ENCODE measurements at regions of chr5 and their contacts with region 1.

Region 1: GRCh38 chr5:54243473-54244080 is 66.8 kb downstream of the ARL15 start:
- DNase-seq: peak; percentile 34
- H3K4me3 Mint-ChIP-seq: no peak overlapping the region
- H3K27ac Mint-ChIP-seq: no peak overlapping the region
- H3K4me1 Mint-ChIP-seq: no peaks in the 10 kb centered on the region
- H3K27me3 Mint-ChIP-seq: no peaks in the 10 kb centered on the region

Region 2: DNA sequence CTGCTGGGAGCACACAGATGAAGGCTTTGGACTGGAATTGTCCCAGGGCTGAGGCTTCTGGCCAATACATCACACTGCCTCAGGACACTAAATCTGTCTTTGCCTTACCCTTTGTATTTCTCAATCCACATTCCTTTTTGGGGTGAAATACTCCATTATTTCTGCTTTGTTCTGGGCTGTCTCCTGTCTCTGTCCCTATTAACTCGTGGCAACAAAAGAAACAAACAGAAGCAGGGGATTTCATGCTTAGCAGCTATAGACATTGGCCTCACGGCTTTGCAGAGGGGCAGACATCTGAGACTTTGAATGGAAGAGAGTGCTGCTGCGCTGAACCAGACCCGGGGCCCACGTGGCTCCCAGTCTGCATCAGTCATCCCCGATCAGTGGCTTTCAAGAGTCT is 63.0 kb before region 1 on chr5:
- CTCF ChIA-PET with region 1: no interaction called
- POLR2A ChIA-PET with region 1: no interaction called
- intact Hi-C with region 1: no loop called
- DNase-seq: no peak
- H3K4me3 Mint-ChIP-seq: no peak overlapping the region
- H3K27ac Mint-ChIP-seq: no peak overlapping the region
- H3K4me1 Mint-ChIP-seq: peaks cover 3% of the 10 kb centered on the region
- H3K27me3 Mint-ChIP-seq: no peaks in the 10 kb centered on the region

Region 3: GRCh38 chr5:54215233-54215736 is 28.3 kb before region 1 on chr5:
- CTCF ChIA-PET with region 1: no interaction called
- POLR2A ChIA-PET with region 1: no interaction called
- intact Hi-C with region 1: no loop called
- DNase-seq: no peak
- H3K4me3 Mint-ChIP-seq: no peak overlapping the region
- H3K27ac Mint-ChIP-seq: no peak overlapping the region
- H3K4me1 Mint-ChIP-seq: peaks cover 4% of the 10 kb centered on the region
- H3K27me3 Mint-ChIP-seq: no peaks in the 10 kb centered on the region

Region 4: DNA sequence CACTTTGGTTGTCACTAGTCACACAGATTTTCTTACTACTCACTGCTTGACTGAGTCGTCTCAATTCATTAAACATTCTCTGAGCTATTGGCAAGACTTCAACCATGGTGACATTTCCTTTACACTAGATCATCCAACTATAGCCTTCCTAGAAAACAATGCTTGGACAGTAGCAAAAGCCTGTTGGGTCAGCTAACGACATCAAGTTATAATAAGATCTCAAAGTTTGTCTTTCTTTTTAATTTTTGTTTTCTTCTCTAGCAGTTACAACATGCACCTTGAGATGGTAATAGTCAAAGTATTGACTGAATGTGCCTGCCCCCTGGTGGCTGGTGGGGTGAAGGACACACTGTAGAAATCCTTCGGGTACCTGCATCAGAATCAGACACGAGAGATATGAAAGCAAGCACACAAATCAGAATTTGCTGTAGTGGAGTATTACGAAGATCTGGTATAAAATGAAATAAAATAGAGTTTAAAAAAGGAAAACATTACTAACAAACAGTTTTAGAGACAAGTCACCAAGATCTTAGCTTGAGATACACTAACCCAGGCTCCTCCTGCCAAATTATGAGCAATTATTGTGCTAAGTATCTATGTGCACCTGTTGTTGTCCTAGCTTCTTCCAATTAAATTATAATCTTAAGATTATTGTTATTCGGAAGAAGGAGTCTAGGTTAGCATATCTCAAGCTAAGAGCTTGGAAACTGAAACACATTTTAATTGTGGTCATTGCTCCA is 14.4 kb before region 1 on chr5:
- CTCF ChIA-PET with region 1: interaction called, 16 read pairs
- POLR2A ChIA-PET with region 1: no interaction called
- intact Hi-C with region 1: no loop called
- DNase-seq: peak; percentile 80
- H3K4me3 Mint-ChIP-seq: no peak overlapping the region
- H3K27ac Mint-ChIP-seq: no peak overlapping the region
- H3K4me1 Mint-ChIP-seq: peaks cover 2% of the 10 kb centered on the region
- H3K27me3 Mint-ChIP-seq: no peaks in the 10 kb centered on the region

Region 5: DNA sequence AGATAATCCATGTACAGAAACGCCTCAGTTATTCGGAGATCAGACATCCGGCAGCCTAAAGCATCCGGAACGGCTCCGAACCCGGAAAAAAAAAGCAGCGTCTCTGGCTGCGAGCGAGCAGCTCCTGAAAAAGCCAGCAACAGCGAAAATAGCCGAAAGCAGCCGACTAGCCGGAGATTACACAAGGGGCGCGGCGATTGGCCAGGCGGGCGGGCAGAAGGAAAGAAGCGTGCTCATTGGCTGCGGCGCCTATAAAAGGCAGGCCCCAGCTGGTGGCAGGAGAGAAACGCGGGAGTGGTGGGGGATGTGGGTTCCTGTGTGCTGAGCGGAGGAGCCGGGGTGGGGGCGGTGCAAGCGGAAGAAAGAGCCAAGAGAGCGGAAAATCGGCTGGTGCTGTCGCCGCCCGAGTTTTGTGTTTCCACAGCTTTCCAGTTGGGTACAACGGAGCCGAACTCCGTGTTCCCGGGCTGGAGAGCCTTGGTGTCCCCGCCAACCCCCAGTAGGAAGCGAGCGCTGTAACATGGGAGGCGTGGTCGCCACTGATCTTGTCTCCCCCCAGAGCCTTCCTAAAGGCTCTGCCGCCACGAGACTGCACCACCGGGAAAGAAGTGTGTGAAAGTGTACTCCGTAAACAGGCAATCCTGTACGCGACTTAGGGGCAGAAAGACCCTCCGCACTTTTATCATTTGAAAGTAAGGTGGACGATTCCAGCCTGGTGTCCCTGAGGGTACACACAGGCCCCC is 67.0 kb after region 1 on chr5 and contains the start of gene ARL15:
- CTCF ChIA-PET with region 1: interaction called, 6 read pairs
- POLR2A ChIA-PET with region 1: no interaction called
- intact Hi-C with region 1: loop called (anchors 5 kb)
- DNase-seq: peak; percentile 98
- H3K4me3 Mint-ChIP-seq: peak within 1 kb of the TSS; percentile 86
- H3K27ac Mint-ChIP-seq: peak within 1 kb of the TSS; percentile 89
- H3K4me1 Mint-ChIP-seq: peaks cover 25% of the 10 kb centered on the region
- H3K27me3 Mint-ChIP-seq: peaks cover 3% of the 10 kb centered on the region
- total RNA-seq, gene ARL15: 4.5 to 5.5 TPM

Region 6: GRCh38 chr5:54344653-54345052 is 101.1 kb after region 1 on chr5:
- CTCF ChIA-PET with region 1: no interaction called
- POLR2A ChIA-PET with region 1: no interaction called
- intact Hi-C with region 1: no loop called
- DNase-seq: no peak
- H3K4me3 Mint-ChIP-seq: no peak overlapping the region
- H3K27ac Mint-ChIP-seq: no peak overlapping the region
- H3K4me1 Mint-ChIP-seq: no peaks in the 10 kb centered on the region
- H3K27me3 Mint-ChIP-seq: peaks cover 2% of the 10 kb centered on the region

Region 7: GRCh38 chr5:54415896-54416601 is 172.5 kb after region 1 on chr5:
- CTCF ChIA-PET with region 1: interaction called, 45 read pairs
- POLR2A ChIA-PET with region 1: no interaction called
- intact Hi-C with region 1: loop called (anchors 1 kb)
- DNase-seq: no peak
- H3K4me3 Mint-ChIP-seq: no peak overlapping the region
- H3K27ac Mint-ChIP-seq: no peak overlapping the region
- H3K4me1 Mint-ChIP-seq: no peaks in the 10 kb centered on the region
- H3K27me3 Mint-ChIP-seq: peaks cover 4% of the 10 kb centered on the region

Region 8: DNA sequence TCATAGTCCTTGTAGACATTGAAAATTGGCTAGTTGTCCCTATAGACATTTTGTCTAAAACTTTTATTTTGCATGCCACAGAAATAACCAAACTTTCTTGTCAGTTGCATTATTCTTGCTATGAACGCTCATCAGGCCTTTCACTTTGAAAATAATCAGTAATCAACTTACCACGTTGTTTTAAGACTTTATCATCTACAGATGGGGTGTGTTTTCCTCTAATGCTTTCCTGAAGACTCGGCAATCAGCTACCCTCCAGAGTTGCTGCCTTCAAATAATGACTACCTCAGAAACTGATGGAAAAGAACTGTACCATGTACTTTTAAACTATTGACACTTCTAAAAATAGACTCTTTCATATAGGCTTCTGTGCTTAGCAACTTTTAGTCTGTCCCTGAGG is 178.4 kb after region 1 on chr5:
- CTCF ChIA-PET with region 1: interaction called, 45 read pairs
- POLR2A ChIA-PET with region 1: no interaction called
- intact Hi-C with region 1: loop called (anchors 1 kb)
- DNase-seq: no peak
- H3K4me3 Mint-ChIP-seq: no peak overlapping the region
- H3K27ac Mint-ChIP-seq: no peak overlapping the region
- H3K4me1 Mint-ChIP-seq: no peaks in the 10 kb centered on the region
- H3K27me3 Mint-ChIP-seq: peaks cover 11% of the 10 kb centered on the region

Region 9: GRCh38 chr5:54492178-54492577 is 248.6 kb after region 1 on chr5:
- CTCF ChIA-PET with region 1: interaction called, 31 read pairs
- POLR2A ChIA-PET with region 1: no interaction called
- intact Hi-C with region 1: loop called (anchors 2 kb)
- DNase-seq: no peak
- H3K4me3 Mint-ChIP-seq: no peak overlapping the region
- H3K27ac Mint-ChIP-seq: no peak overlapping the region
- H3K4me1 Mint-ChIP-seq: no peaks in the 10 kb centered on the region
- H3K27me3 Mint-ChIP-seq: peaks cover 4% of the 10 kb centered on the region

Region 10: GRCh38 chr5:55004729-55005128 is 761.2 kb after region 1 on chr5:
- CTCF ChIA-PET with region 1: no interaction called
- POLR2A ChIA-PET with region 1: no interaction called
- intact Hi-C with region 1: no loop called
- DNase-seq: no peak
- H3K4me3 Mint-ChIP-seq: no peak overlapping the region
- H3K27ac Mint-ChIP-seq: no peak overlapping the region
- H3K4me1 Mint-ChIP-seq: peaks cover 33% of the 10 kb centered on the region
- H3K27me3 Mint-ChIP-seq: no peaks in the 10 kb centered on the region